Aorta (tissue), 5 donors: ENCODE measurements at regions of chr6 and their contacts with region 1.

Region 1: GRCh38 chr6:125153391-125154117 is at the start of gene TPD52L1:
- DNase-seq: peak; percentile 84 to 92
- ATAC-seq: peak; percentile 95
- H3K4me3 ChIP-seq: peak within 1 kb of the TSS; percentile 11 to 65
- H3K27ac ChIP-seq: peak within 1 kb of the TSS in 1 of 2 donors; percentile 15
- H3K4me1 ChIP-seq: no peaks in the 10 kb centered on the region
- H3K27me3 ChIP-seq: no peaks in the 10 kb centered on the region
- total RNA-seq, gene TPD52L1: 39.0 to 54.1 TPM

Region 2: GRCh38 chr6:124640432-124640831 is 513.1 kb before region 1 on chr6:
- intact Hi-C with region 1: no loop called
- DNase-seq: no peak
- ATAC-seq: no peak
- H3K4me3 ChIP-seq: no peak overlapping the region
- H3K27ac ChIP-seq: no peak overlapping the region
- H3K4me1 ChIP-seq: no peaks in the 10 kb centered on the region
- H3K27me3 ChIP-seq: no peaks in the 10 kb centered on the region

Region 3: GRCh38 chr6:125197795-125198269 is 44.3 kb after region 1 on chr6:
- intact Hi-C with region 1: loop called (anchors 5 kb)
- DNase-seq: peak; percentile 76 to 84
- ATAC-seq: peak; percentile 90
- H3K4me3 ChIP-seq: no peak overlapping the region
- H3K27ac ChIP-seq: peak overlapping the region in 1 of 2 donors; percentile 43
- H3K4me1 ChIP-seq: peaks cover 9 to 15% of the 10 kb centered on the region in 2 donors
- H3K27me3 ChIP-seq: peaks cover 0 to 2% of the 10 kb centered on the region in 2 donors

Region 4: GRCh38 chr6:125207956-125208355 is 54.4 kb after region 1 on chr6:
- intact Hi-C with region 1: no loop called
- DNase-seq: no peak
- ATAC-seq: no peak
- H3K4me3 ChIP-seq: no peak overlapping the region
- H3K27ac ChIP-seq: no peak overlapping the region
- H3K4me1 ChIP-seq: peaks cover 0 to 5% of the 10 kb centered on the region in 2 donors
- H3K27me3 ChIP-seq: no peaks in the 10 kb centered on the region

Region 5: DNA sequence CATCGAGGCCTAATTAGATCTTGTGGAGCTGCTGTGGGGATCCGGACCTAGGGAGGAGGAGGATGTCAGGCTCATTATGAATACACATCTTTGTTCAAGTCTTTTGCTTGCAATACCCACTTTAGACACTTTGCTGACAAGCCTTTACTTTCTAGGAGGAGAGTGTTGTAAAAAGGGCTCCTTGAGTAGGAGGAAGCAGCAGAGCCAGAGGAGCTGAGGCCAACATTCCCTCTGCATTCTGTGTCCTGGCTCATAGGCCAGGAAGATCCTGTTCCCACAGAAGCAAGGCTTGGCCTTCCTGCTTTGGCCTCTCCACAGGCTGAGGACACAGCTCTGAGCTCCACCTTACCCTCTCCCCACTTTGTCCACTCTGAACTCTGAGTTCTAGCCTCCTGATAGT is 67.2 kb after region 1 on chr6:
- intact Hi-C with region 1: loop called in 1 of 2 experiments (anchors 10 kb)
- DNase-seq: peak in 1 of 2 donors; percentile 58
- ATAC-seq: peak; percentile 79
- H3K4me3 ChIP-seq: no peak overlapping the region
- H3K27ac ChIP-seq: peak overlapping the region; percentile 72 to 93
- H3K4me1 ChIP-seq: peaks cover 4 to 6% of the 10 kb centered on the region in 2 donors
- H3K27me3 ChIP-seq: no peaks in the 10 kb centered on the region

Region 6: GRCh38 chr6:125262016-125263013 is 108.8 kb after region 1 on chr6:
- intact Hi-C with region 1: loop called in 1 of 2 experiments (anchors 10 kb)
- DNase-seq: peak; percentile 85 to 87
- ATAC-seq: peak; percentile 67
- H3K4me3 ChIP-seq: no peak overlapping the region
- H3K27ac ChIP-seq: peak overlapping the region; percentile 28 to 94
- H3K4me1 ChIP-seq: peaks cover 2 to 3% of the 10 kb centered on the region in 2 donors
- H3K27me3 ChIP-seq: no peaks in the 10 kb centered on the region

Region 7: DNA sequence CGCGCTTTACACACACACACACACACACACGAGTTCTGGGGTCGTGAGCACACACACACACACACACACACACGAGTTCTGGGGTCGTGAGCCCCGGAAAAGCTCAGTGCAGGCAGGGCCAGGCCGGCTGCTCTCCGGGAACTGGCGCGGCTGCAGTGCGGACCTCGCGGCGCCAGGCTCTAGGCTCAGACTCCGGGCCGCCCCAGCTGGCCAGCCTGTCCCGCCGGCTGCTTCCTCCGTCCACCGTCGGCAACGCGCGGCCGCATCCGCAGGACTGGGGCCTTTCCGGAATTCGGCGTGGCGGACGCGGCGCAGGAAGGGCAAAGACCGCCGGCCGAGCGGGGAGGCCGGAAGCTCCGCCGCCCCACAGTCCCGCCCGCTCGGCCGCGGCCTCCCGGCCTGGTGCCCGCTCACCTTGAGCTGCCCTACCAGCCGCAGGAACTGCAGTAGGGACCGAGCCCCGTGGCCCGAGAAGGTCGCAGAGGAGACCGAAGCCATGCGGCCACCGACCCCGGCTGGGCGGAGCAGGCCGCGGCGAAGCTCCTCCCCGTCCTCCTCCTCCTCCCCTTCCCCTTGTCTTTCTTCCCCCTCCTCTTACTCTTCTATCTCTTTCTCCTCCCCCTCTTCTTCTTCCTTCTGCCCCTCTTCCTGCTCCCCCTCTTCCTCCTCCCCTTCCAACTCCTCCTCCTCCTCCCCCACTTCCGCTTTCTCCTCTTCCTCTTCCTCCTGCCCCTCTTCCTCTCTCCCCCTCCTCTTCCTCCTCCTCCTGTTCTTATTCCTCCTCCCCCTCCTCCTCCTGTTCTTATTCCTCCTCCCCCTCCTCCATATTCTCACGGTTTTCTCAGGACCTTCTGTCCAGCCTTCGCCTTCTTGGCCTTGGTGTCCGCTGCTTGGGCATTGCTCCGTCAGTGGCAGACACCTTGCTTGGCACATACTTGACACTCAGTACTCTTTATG is 148.2 kb after region 1 on chr6 and contains the start of gene HDDC2:
- intact Hi-C with region 1: loop called (anchors 2 to 5 kb)
- DNase-seq: peak; percentile 89 to 93
- ATAC-seq: peak; percentile 92
- H3K4me3 ChIP-seq: peak within 1 kb of the TSS; percentile 51 to 73
- H3K27ac ChIP-seq: peak within 1 kb of the TSS; percentile 61 to 92
- H3K4me1 ChIP-seq: no peaks in the 10 kb centered on the region
- H3K27me3 ChIP-seq: no peaks in the 10 kb centered on the region
- total RNA-seq, gene HDDC2: 48.0 to 60.9 TPM

Region 8: GRCh38 chr6:125764121-125764671 is 610.6 kb after region 1 on chr6:
- intact Hi-C with region 1: loop called (anchors 5 kb)
- DNase-seq: no peak
- ATAC-seq: no peak
- H3K4me3 ChIP-seq: no peak overlapping the region
- H3K27ac ChIP-seq: peak overlapping the region; percentile 36 to 76
- H3K4me1 ChIP-seq: peaks cover 0 to 2% of the 10 kb centered on the region in 2 donors
- H3K27me3 ChIP-seq: no peaks in the 10 kb centered on the region